BJ (cell line): ENCODE measurements at regions of chr12 and their contacts with region 1.

Region 1: DNA sequence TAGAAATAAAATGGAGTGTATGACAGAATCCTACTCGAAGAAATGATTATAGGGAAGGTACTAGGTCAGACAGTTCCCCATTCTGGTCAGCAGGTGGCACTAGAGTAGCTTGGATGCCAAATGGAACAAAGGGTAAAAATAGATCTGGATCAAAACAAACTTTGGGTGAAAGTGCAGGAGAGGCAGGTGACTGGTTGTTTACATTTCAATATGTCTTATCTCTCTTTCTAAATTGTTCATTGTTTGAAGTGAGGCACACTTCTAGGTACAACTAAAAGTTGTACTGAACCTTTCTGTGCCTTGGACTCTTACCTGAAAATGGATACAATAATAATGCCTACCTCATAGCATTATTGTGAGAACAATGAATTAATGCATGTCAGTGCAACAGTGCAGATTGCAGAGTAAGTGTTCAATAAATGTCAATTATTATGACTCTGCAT is 62.0 kb upstream of the OSBPL8 start:
- DNase-seq: no peak
- H3K4me3 ChIP-seq: no peak overlapping the region
- H3K27me3 ChIP-seq: no peaks in the 10 kb centered on the region
- CTCF ChIP-seq: peak; percentile 82

Region 2: GRCh38 chr12:76790564-76791552 is 169.3 kb after region 1 on chr12:
- CTCF ChIA-PET with region 1: interaction called, 56 read pairs
- POLR2A ChIA-PET with region 1: no interaction called
- DNase-seq: no peak
- H3K4me3 ChIP-seq: no peak overlapping the region
- H3K27me3 ChIP-seq: no peaks in the 10 kb centered on the region
- CTCF ChIP-seq: peak; percentile 37

Region 3: GRCh38 chr12:76927170-76927784 is 305.7 kb after region 1 on chr12:
- CTCF ChIA-PET with region 1: interaction called, 10 read pairs
- POLR2A ChIA-PET with region 1: no interaction called
- DNase-seq: no peak
- H3K4me3 ChIP-seq: no peak overlapping the region
- H3K27me3 ChIP-seq: peaks cover 2% of the 10 kb centered on the region; the same call in 1 of the 2 replicates
- CTCF ChIP-seq: peak; percentile 76

Region 4: DNA sequence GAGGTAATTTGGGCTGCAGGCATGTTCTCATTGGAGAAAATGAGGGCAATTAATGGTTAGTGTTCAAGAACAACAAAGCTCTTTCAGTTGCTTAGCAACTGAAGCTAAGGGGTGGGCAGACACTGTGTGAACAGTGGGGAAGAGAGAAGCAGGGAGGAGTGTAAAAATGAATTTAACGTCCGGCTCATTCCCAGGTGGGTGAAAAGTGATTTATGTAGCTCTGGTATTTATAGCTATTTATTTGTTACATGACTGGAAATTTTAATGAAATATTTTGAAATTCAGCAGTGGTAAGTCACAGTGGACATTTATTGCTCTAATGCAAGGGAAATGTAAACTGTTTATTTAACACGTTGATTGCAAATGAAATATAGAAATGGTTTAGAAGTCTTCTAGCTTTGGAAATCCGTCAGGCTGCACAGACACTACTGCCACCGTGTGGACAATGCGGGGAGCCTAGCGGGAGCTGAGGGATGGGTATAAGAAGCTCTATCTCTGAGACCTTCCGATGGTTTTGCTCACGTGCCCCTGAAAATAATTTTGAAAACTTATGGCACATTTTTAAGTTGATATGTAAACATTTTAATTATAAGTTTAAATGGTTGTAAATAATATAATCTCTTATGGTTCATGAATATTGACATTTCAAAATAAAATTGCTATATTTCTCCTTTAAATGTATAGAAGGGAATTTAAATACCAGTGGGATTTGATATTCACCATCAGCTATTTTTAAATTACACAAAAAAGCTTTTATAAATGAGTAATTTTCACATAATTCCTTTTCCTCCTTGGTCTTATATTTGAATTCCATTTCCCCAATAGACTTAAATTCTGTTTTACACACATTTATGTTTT is 389.3 kb after region 1 on chr12:
- CTCF ChIA-PET with region 1: interaction called, 32 read pairs
- POLR2A ChIA-PET with region 1: no interaction called
- DNase-seq: peak; percentile 22
- H3K4me3 ChIP-seq: no peak overlapping the region
- H3K27me3 ChIP-seq: no peaks in the 10 kb centered on the region
- CTCF ChIP-seq: peak; percentile 98